ENCODE measurements at regions of chr10 and their contacts with region 1.

Region 1: GRCh38 chr10:15725603-15726002 is 5.9 kb upstream of the ITGA8 start:
- DNase-seq: no peak
- H3K4me3 ChIP-seq: no peak overlapping the region
- CTCF ChIP-seq: no peak
- POLR2A ChIP-seq: no peak

Region 2: DNA sequence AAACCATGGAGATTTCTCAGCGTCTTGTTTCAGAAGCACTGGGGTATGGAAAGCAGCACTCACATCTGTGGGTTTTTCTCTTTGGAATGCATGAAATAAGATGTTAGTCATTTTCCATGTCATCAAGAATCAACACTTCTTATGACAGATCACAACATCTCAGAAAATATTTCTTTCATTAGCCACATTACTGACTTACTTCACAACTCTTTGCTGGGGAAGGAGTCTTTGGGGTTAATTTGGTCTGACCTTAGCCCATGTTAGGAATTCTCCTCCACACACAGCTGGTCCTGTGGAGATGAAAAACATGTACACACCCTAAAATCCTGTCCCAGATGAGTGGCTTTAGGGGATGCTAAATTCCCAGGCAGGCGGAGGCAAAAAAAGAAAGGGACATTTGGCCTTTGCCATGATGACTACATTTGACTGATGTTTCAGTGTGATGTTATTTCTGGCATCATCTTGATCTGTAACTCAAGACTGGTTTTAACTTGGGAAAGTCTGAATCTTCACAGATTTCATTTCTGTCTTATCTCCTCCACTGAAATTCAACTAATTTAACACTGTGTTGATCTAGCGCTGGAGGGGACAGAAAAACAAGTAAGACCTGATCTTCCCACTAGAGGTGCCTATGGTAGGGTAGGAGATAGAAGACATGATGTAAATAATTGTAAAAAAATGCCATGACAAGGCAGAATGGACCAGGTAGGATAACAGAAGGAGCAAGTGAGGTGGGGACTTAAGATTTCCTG is 1775.6 kb before region 1 on chr10:
- intact Hi-C with region 1: no loop called
- DNase-seq: peak in 1 of 2 donors; percentile 5
- H3K4me3 ChIP-seq: no peak overlapping the region
- CTCF ChIP-seq: no peak
- POLR2A ChIP-seq: no peak

Region 3: GRCh38 chr10:15595260-15595659 is 130.3 kb before region 1 on chr10:
- intact Hi-C with region 1: loop called (anchors 10 kb)
- DNase-seq: no peak
- H3K4me3 ChIP-seq: no peak overlapping the region
- CTCF ChIP-seq: no peak
- POLR2A ChIP-seq: no peak